CD4-positive, alpha-beta memory T cell (primary cell): ENCODE measurements at regions of chr4 and their contacts with region 1.

Region 1: GRCh38 chr4:40193016-40193571 is 3.7 kb upstream of the RHOH start:
- DNase-seq: peak in 4 of 5 donors; percentile 53 to 62 (median 57)
- H3K4me3 ChIP-seq: peak overlapping the region; percentile 12 to 42
- H3K4me3 Mint-ChIP-seq: peak overlapping the region; percentile 78 to 96 (median 88)
- H3K27ac ChIP-seq: peak overlapping the region; percentile 99
- H3K27ac Mint-ChIP-seq: peak overlapping the region; percentile 96 to 100 (median 100)
- H3K4me1 ChIP-seq: peaks cover 52% of the 10 kb centered on the region
- H3K4me1 Mint-ChIP-seq: peaks cover 40 to 84% (median 56%) of the 10 kb centered on the region in 4 donors
- H3K27me3 ChIP-seq: no peaks in the 10 kb centered on the region
- H3K27me3 Mint-ChIP-seq: no peaks in the 10 kb centered on the region

Region 2: DNA sequence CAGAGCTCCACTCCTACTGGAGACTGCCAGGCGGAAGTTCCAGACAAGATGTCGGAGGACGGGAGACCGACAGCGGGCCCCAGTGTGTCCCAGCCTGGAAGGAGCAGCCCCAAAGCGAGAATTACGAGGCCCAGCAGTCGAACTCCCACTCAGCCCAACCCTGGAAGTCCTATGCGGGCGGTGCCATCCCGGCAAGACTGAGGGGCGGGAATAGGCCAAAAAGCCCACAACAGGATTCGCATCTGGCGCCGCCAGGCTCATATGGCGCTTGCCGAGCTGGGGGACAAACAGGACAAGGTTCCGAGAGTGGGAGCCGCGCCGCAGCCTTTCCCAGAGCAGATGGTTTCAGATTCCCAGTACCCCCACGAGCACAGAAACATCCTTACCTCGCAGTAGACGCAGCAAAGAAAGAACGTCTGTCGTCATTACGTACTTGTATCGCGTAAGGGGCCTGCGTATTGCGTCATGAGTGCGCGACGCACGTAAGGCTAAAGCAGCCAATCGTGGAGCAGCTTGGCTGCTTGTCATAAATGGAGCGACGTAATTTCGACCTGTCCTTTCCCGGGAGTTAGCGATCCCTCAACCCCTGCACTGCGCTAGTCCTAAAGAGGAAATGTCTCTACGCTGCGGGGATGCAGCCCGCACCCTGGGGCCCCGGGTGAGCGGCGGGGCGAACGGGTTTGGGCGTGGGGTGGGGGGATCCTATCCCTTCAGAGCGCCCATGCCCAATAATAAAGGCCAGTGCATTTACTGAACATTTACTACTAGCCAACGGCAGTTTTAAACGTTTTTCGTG is 734.4 kb before region 1 on chr4 and contains the starts of genes LIAS and RPL9:
- CTCF ChIA-PET with region 1: no interaction called
- POLR2A ChIA-PET with region 1: no interaction called
- intact Hi-C with region 1: no loop called
- DNase-seq: peak; percentile 92 to 96 (median 94)
- H3K4me3 ChIP-seq: peak within 1 kb of the TSS; percentile 96 to 97
- H3K4me3 Mint-ChIP-seq: peak within 1 kb of the TSS; percentile 96 to 99 (median 98)
- H3K27ac ChIP-seq: peak within 1 kb of the TSS; percentile 99
- H3K27ac Mint-ChIP-seq: peak within 1 kb of the TSS; percentile 99 to 100 (median 100)
- H3K4me1 ChIP-seq: peaks cover 33% of the 10 kb centered on the region
- H3K4me1 Mint-ChIP-seq: peaks cover 22 to 55% (median 33%) of the 10 kb centered on the region in 4 donors
- H3K27me3 ChIP-seq: no peaks in the 10 kb centered on the region
- H3K27me3 Mint-ChIP-seq: no peaks in the 10 kb centered on the region
- total RNA-seq, gene LIAS: 21.7 to 24.7 TPM
- total RNA-seq, gene RPL9: 2,318 to 2,449 TPM

Region 3: DNA sequence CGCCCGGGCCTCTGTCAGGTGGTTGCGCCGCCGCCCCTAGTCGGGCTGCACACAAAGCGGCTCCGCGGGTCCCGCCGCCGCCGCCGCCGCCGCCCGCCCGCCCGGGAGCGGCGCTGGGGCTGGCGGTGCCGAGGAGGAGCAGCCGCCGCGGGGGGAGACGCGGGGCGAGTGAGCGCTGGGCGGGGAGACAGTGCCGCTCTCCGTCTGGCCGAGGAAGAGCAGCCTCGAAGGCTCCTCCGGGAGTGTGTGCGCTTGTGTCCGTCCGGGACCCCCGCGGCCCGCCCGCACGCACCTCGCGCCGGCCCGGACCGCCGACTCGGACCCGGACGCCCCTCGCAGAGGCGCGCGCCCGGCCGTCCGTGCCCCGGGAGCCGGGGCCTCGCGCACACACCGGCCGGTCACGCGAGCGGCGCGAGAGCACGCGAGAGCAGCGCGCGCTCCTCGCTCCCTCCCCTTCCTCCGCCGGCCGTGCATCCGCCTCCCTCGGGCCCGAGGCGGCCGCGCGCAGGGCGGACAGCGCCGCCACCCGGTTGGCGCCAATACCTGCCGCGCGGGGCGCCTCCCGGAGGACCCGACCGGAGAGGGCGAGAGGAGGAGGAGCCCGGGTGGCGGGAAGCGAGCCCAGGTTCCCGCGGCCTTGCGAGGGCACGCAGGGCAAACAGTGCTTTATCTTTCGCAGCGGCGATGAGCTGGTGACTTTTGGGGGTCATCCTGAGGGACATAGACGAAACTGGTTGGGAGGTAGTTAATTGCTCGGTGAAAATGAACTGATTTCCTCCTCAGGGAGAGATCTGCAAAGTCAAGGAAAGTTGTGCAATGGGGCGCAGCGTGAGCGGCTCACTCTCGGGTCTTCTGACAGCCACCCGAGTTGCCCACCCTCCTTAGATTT is 215.4 kb before region 1 on chr4 and contains the start of gene PDS5A:
- CTCF ChIA-PET with region 1: no interaction called
- POLR2A ChIA-PET with region 1: no interaction called
- intact Hi-C with region 1: no loop called
- DNase-seq: peak; percentile 86 to 95 (median 91)
- H3K4me3 ChIP-seq: peak within 1 kb of the TSS; percentile 22 to 66
- H3K4me3 Mint-ChIP-seq: peak within 1 kb of the TSS; percentile 87 to 92 (median 90)
- H3K27ac ChIP-seq: peak within 1 kb of the TSS; percentile 92
- H3K27ac Mint-ChIP-seq: peak within 1 kb of the TSS; percentile 95 to 97 (median 96)
- H3K4me1 ChIP-seq: peaks cover 39% of the 10 kb centered on the region
- H3K4me1 Mint-ChIP-seq: peaks cover 23 to 40% (median 31%) of the 10 kb centered on the region in 4 donors
- H3K27me3 ChIP-seq: no peaks in the 10 kb centered on the region
- H3K27me3 Mint-ChIP-seq: no peaks in the 10 kb centered on the region
- total RNA-seq, gene PDS5A: 96.9 to 97.6 TPM

Region 4: GRCh38 chr4:40205259-40206198 is 12.4 kb after region 1 on chr4:
- CTCF ChIA-PET with region 1: interaction called, 12 read pairs
- POLR2A ChIA-PET with region 1: interaction called, 357 read pairs
- intact Hi-C with region 1: loop called (anchors 1 kb)
- DNase-seq: peak in 4 of 5 donors; percentile 44 to 68 (median 49)
- H3K4me3 ChIP-seq: peak overlapping the region; percentile 39 to 67
- H3K4me3 Mint-ChIP-seq: peak overlapping the region; percentile 86 to 100 (median 96)
- H3K27ac ChIP-seq: peak overlapping the region; percentile 99
- H3K27ac Mint-ChIP-seq: peak overlapping the region; percentile 92 to 100 (median 96)
- H3K4me1 ChIP-seq: peaks cover 75% of the 10 kb centered on the region
- H3K4me1 Mint-ChIP-seq: peaks cover 48 to 87% (median 61%) of the 10 kb centered on the region in 4 donors
- H3K27me3 ChIP-seq: no peaks in the 10 kb centered on the region
- H3K27me3 Mint-ChIP-seq: no peaks in the 10 kb centered on the region

Region 5: GRCh38 chr4:40283968-40284367 is 90.9 kb after region 1 on chr4:
- CTCF ChIA-PET with region 1: interaction called, 12 read pairs
- POLR2A ChIA-PET with region 1: interaction called, 14 read pairs
- intact Hi-C with region 1: no loop called
- DNase-seq: peak; percentile 71 to 97 (median 86)
- H3K4me3 ChIP-seq: no peak overlapping the region
- H3K4me3 Mint-ChIP-seq: peak overlapping the region in 7 of 8 donors; percentile 70 to 86 (median 79)
- H3K27ac ChIP-seq: peak overlapping the region; percentile 49
- H3K27ac Mint-ChIP-seq: peak overlapping the region; percentile 92 to 98 (median 96)
- H3K4me1 ChIP-seq: peaks cover 39% of the 10 kb centered on the region
- H3K4me1 Mint-ChIP-seq: peaks cover 34 to 73% (median 55%) of the 10 kb centered on the region in 4 donors
- H3K27me3 ChIP-seq: no peaks in the 10 kb centered on the region
- H3K27me3 Mint-ChIP-seq: peaks cover 0 to 2% of the 10 kb centered on the region in 2 donors

Region 6: DNA sequence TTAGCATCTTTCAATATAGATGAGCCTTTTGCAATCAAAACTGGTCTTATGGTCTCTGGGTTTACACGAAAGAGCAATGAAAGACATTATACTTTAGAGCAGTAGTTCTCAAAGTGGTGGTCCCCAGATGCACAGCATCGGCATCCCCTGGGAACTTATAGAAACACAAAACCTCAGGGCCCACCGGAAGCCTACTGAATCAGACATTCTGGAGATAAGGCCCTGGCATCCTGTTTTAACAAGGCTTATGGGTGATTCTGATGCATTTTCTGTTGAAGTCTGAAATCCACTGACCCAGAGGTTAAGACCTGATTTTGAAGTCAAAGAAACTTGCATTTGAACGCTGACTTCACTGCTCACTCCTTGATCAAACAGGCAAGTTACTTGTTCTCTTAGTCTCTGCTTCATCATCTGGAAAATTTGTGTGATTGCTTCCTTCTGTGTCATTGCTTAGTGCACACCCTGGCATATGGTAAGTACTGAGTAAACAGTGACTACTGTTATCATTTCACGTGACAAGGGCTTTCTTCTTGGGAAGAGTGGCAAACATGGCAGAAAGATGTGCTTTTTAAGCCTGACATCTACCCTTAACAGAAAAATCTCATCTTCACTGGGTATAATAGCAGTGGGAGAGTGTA is 156.6 kb after region 1 on chr4:
- CTCF ChIA-PET with region 1: no interaction called
- POLR2A ChIA-PET with region 1: no interaction called
- intact Hi-C with region 1: no loop called
- DNase-seq: no peak
- H3K4me3 ChIP-seq: no peak overlapping the region
- H3K4me3 Mint-ChIP-seq: no peak overlapping the region
- H3K27ac ChIP-seq: no peak overlapping the region
- H3K27ac Mint-ChIP-seq: peak overlapping the region in 1 of 7 donors; percentile 2
- H3K4me1 ChIP-seq: no peaks in the 10 kb centered on the region
- H3K4me1 Mint-ChIP-seq: peaks cover 0 to 2% (median 0%) of the 10 kb centered on the region in 4 donors
- H3K27me3 ChIP-seq: no peaks in the 10 kb centered on the region
- H3K27me3 Mint-ChIP-seq: peaks cover 3% of the 10 kb centered on the region in 2 donors